BJ (cell line): ENCODE measurements at regions of chr3 and their contacts with region 1.

Region 1: GRCh38 chr3:129183569-129184395 is at the start of gene CNBP:
- DNase-seq: peak; percentile 59
- H3K4me3 ChIP-seq: peak within 1 kb of the TSS; percentile 89
- H3K27me3 ChIP-seq: no peaks in the 10 kb centered on the region
- CTCF ChIP-seq: no peak
- polyA plus RNA-seq, gene CNBP: 268 and 278 TPM in 2 replicates

Region 2: DNA sequence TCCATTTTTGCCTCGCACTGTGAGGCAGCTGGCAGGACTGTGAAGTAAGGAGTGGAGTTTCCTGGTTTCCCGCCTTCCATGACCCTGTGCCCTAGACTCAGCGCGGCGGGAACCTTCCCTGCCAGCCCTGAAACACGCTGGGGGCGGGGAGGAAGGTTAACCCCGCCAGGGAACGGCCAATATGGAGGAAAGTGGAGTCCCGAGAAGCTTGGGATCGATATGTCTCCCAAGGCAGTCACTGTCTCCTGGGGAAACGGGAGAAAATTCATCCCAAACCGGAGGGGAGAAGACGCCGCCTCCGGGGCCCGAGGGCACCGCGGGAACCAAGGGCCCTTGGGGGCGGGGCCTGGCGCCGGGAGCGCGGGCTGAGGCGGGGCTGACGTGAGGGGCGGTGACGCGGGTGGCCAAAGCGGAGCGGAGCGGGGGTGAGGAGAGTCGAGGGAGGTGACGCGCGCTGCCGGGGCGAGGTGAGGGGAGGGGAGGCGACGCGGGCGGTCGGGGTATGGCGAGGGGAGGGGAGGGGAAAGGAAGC is 94.7 kb after region 1 on chr3 and contains the start of gene HMCES:
- CTCF ChIA-PET with region 1: no interaction called
- POLR2A ChIA-PET with region 1: interaction called, 15 read pairs
- DNase-seq: no peak
- H3K4me3 ChIP-seq: peak within 1 kb of the TSS; percentile 88
- H3K27me3 ChIP-seq: no peaks in the 10 kb centered on the region
- CTCF ChIP-seq: no peak
- polyA plus RNA-seq, gene HMCES: 23.1 and 27.2 TPM in 2 replicates